GM12878 (cell line): ENCODE measurements at regions of chr3 and their contacts with region 1.

Region 1: GRCh38 chr3:177197041-177197727 is at the start of gene TBL1XR1:
- DNase-seq: no peak
- ATAC-seq: peak; percentile 16
- H3K4me3 ChIP-seq: peak within 1 kb of the TSS; percentile 99
- H3K27ac ChIP-seq: peak within 1 kb of the TSS; percentile 97
- H3K4me1 ChIP-seq: peaks cover 13% of the 10 kb centered on the region
- H3K27me3 ChIP-seq: no peaks in the 10 kb centered on the region
- CTCF ChIP-seq: no peak
- EP300 ChIP-seq: no peak
- POLR2A ChIP-seq: peak; percentile 69
- RAD21 ChIP-seq: peak; percentile 28
- polyA plus RNA-seq, gene TBL1XR1: 13.0 to 77.5 TPM

Region 2: DNA sequence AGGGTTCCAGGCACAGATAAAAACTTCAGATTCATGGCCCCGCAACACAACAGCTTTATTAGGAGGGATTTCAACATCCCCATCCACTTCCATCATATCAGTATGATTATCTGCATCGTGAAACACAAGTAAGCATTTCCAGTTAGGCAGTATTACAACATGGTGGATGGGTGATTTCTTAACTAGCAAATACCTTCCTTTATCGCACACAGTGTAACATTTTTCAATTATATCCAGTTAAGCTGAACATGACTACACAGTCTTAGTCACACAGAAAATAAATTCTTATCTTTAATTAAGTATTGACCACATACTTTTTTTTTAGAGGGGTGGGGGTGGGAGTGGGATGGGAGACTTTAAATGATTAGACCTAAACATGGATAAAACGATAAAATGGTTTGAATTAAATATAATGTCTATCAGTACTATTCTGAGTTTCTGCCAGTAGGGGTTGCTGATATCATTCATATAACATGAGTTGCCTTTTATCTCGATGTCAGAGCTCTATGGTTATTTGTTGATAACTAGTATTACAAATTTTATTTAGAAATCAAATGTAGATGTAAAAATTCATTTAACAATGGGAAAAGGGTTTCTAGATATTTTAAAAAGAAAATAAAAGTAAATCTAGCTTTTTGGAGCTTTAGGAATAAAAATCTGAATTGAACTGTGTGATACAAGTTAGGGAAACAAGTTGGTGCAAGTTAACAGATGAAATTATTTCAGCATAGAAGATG is 146.5 kb before region 1 on chr3:
- CTCF ChIA-PET with region 1: interaction called, 4 read pairs
- POLR2A ChIA-PET with region 1: no interaction called
- RAD21 ChIA-PET with region 1: interaction called, 13 read pairs
- SMC1A ChIA-PET with region 1: interaction called, 21 read pairs
- in situ Hi-C with region 1: no loop called
- intact Hi-C with region 1: loop called (anchors 2 kb)
- DNase-seq: no peak
- ATAC-seq: peak; percentile 75
- H3K4me3 ChIP-seq: no peak overlapping the region
- H3K27ac ChIP-seq: no peak overlapping the region
- H3K4me1 ChIP-seq: no peaks in the 10 kb centered on the region
- H3K27me3 ChIP-seq: no peaks in the 10 kb centered on the region
- CTCF ChIP-seq: peak; percentile 22 to 65 (median 38); a peak in 4 of 6 replicates
- EP300 ChIP-seq: no peak
- POLR2A ChIP-seq: no peak
- RAD21 ChIP-seq: peak; percentile 73

Region 3: DNA sequence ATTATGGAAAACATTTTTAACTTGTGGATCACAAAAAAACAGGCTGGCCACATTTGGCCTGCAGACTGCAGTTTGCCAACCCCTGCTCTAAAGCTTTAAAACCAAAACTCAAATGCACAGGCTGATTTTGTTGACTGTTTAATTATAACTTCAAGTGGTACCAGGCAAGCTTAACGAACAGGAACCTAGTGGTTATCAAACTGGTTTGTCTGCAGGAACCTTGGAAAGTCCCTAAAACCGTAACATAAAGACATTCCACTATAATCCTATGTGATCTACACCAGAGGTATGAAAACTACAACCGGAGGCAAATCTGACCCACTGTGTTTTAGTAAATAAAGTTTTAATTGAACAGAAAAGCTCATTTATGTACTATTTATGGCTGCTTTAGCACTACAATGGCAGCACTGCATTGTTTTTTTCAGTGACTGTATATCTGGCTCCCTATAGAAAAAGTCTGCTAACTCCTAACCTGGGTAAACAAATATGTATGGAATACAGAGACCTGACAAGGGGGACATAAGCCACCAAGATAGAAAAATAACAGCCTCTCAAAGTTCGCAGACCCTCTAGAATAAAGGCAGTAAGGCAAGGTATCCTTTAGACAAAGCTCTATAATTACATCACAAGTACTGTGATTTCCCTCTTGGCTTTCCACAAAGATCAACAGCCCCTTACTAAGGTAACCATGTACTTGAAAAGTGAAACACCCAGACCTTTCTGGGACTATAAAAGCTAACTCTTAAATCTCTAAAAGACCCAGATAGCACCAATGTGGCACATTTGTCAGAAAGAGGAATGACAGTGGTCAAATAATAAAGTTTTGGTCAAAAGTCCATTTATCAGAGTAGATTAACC is 52.0 kb before region 1 on chr3:
- CTCF ChIA-PET with region 1: interaction called, 13 read pairs
- POLR2A ChIA-PET with region 1: interaction called, 5 read pairs
- RAD21 ChIA-PET with region 1: interaction called, 20 read pairs
- SMC1A ChIA-PET with region 1: interaction called, 18 read pairs
- in situ Hi-C with region 1: no loop called
- intact Hi-C with region 1: loop called (anchors 5 kb)
- DNase-seq: peak; percentile 62
- ATAC-seq: peak; percentile 77
- H3K4me3 ChIP-seq: peak overlapping the region; percentile 41; the same call in 1 of the 2 replicates
- H3K27ac ChIP-seq: peak overlapping the region; percentile 89
- H3K4me1 ChIP-seq: peaks cover 30% of the 10 kb centered on the region
- H3K27me3 ChIP-seq: no peaks in the 10 kb centered on the region
- CTCF ChIP-seq: no peak
- EP300 ChIP-seq: peak in 1 of 2 experiments; percentile 81; a peak in 2 of 4 replicates
- POLR2A ChIP-seq: no peak
- RAD21 ChIP-seq: no peak

Region 4: GRCh38 chr3:177150970-177151627 is 46.1 kb before region 1 on chr3:
- CTCF ChIA-PET with region 1: interaction called, 13 read pairs
- POLR2A ChIA-PET with region 1: interaction called, 5 read pairs
- RAD21 ChIA-PET with region 1: interaction called, 20 read pairs
- SMC1A ChIA-PET with region 1: interaction called, 18 read pairs
- in situ Hi-C with region 1: no loop called
- intact Hi-C with region 1: loop called (anchors 5 kb)
- DNase-seq: peak; percentile 48
- ATAC-seq: peak; percentile 86
- H3K4me3 ChIP-seq: peak overlapping the region; percentile 4; the same call in 1 of the 2 replicates
- H3K27ac ChIP-seq: peak overlapping the region; percentile 6; the same call in 1 of the 2 replicates
- H3K4me1 ChIP-seq: peaks cover 14% of the 10 kb centered on the region
- H3K27me3 ChIP-seq: no peaks in the 10 kb centered on the region
- CTCF ChIP-seq: no peak
- EP300 ChIP-seq: no peak
- POLR2A ChIP-seq: no peak
- RAD21 ChIP-seq: no peak

Region 5: DNA sequence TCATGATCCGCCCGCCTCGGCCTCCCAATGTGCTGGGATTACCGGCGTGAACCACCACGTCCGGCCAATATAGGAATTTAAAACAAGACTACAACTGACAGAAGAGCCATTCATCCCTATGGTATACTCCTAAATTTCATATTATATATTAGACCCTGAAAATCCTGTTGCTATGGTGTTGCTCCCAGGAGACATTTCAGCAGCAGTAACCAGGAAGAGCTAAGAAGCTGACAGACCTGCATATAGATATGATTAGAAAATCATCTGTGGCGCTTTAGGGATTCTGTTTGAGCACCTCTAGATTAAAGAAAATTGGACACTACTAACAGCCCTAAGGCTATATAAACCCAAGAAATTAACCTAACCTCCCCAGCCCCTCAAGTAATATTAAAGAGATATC is 38.7 kb before region 1 on chr3:
- CTCF ChIA-PET with region 1: interaction called, 3 read pairs
- POLR2A ChIA-PET with region 1: interaction called, 3 read pairs
- RAD21 ChIA-PET with region 1: no interaction called
- SMC1A ChIA-PET with region 1: interaction called, 15 read pairs
- in situ Hi-C with region 1: no loop called
- intact Hi-C with region 1: no loop called
- DNase-seq: no peak
- ATAC-seq: no peak
- H3K4me3 ChIP-seq: no peak overlapping the region
- H3K27ac ChIP-seq: no peak overlapping the region
- H3K4me1 ChIP-seq: no peaks in the 10 kb centered on the region
- H3K27me3 ChIP-seq: no peaks in the 10 kb centered on the region
- CTCF ChIP-seq: no peak
- EP300 ChIP-seq: no peak
- POLR2A ChIP-seq: no peak
- RAD21 ChIP-seq: no peak

Region 6: GRCh38 chr3:177314897-177315296 is 117.7 kb after region 1 on chr3:
- CTCF ChIA-PET with region 1: no interaction called
- POLR2A ChIA-PET with region 1: no interaction called
- RAD21 ChIA-PET with region 1: no interaction called
- SMC1A ChIA-PET with region 1: no interaction called
- in situ Hi-C with region 1: no loop called
- intact Hi-C with region 1: loop called (anchors 5 kb)
- DNase-seq: no peak
- ATAC-seq: peak; percentile 73
- H3K4me3 ChIP-seq: no peak overlapping the region
- H3K27ac ChIP-seq: peak overlapping the region; percentile 9; the same call in 1 of the 2 replicates
- H3K4me1 ChIP-seq: peaks cover 9% of the 10 kb centered on the region
- H3K27me3 ChIP-seq: no peaks in the 10 kb centered on the region
- CTCF ChIP-seq: no peak
- EP300 ChIP-seq: no peak; a peak in 1 of 4 replicates
- POLR2A ChIP-seq: no peak
- RAD21 ChIP-seq: no peak

Region 7: DNA sequence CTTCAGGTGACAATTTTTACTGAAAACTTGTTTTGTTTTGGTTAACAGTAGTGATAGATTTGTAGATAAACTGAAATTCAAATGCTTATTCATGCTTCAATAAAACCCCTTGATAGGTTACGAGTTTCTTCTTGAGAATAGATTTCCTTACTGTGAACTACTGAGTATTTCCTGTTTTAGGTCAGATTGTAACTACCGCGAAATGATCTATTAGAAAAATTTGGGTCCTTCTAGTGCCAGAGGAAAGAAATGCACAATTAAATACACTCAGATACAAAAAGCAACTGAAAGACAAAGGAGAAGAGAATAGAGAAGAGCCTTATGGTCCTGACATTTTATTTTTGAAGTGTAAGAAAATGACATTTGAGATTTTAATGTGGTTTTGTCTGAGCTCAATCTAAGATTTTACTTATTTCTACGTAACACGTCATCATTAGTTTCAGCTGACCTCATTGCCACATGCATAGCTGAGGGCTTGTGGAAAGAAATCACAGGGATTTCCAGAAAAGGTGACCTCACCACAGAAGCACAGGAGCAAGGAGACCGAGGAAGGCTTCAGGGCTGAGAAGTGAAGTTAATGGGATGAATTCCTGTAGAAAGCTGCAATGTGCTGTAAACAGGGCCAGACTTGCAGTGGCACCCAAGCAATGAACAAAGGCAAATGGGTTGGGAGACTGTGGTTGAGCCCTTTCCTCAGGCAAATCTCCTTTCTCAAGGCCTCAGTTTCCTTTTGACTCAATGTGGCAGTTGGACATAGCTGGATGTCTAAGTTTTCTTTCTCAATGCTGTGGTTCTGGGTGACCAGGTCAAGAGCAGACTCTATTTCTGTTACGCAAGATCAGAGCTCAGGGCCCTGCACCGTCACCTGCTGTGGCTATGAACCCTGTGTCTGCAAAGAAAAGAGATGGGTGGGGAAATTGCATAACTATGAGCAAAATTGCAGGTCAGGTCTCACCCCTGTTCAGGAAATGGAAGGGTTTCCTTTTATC is 252.1 kb after region 1 on chr3:
- CTCF ChIA-PET with region 1: no interaction called
- POLR2A ChIA-PET with region 1: no interaction called
- RAD21 ChIA-PET with region 1: no interaction called
- SMC1A ChIA-PET with region 1: no interaction called
- in situ Hi-C with region 1: no loop called
- intact Hi-C with region 1: loop called (anchors 2 kb)
- DNase-seq: peak; percentile 36
- ATAC-seq: peak; percentile 95
- H3K4me3 ChIP-seq: peak overlapping the region; percentile 9; the same call in 1 of the 2 replicates
- H3K27ac ChIP-seq: no peak overlapping the region
- H3K4me1 ChIP-seq: peaks cover 19% of the 10 kb centered on the region
- H3K27me3 ChIP-seq: no peaks in the 10 kb centered on the region
- CTCF ChIP-seq: no peak
- EP300 ChIP-seq: no peak
- POLR2A ChIP-seq: no peak
- RAD21 ChIP-seq: peak; percentile 14; the same call in 1 of the 2 replicates